AG04450 (cell line): ENCODE measurements at regions of chr18 and their contacts with region 1.

Region 1: GRCh38 chr18:8654503-8655451 is 45.5 kb downstream of the RAB12 start:
- DNase-seq: no peak
- H3K4me3 ChIP-seq: no peak overlapping the region
- H3K27ac ChIP-seq: no peak overlapping the region
- H3K27me3 ChIP-seq: no peaks in the 10 kb centered on the region
- CTCF ChIP-seq: peak; percentile 76

Region 2: GRCh38 chr18:8982416-8983184 is 327.8 kb after region 1 on chr18:
- CTCF ChIA-PET with region 1: interaction called, 67 read pairs
- POLR2A ChIA-PET with region 1: no interaction called
- DNase-seq: peak; percentile 58
- H3K4me3 ChIP-seq: no peak overlapping the region
- H3K27ac ChIP-seq: peak overlapping the region; percentile 78
- H3K27me3 ChIP-seq: no peaks in the 10 kb centered on the region
- CTCF ChIP-seq: peak; percentile 33

Region 3: DNA sequence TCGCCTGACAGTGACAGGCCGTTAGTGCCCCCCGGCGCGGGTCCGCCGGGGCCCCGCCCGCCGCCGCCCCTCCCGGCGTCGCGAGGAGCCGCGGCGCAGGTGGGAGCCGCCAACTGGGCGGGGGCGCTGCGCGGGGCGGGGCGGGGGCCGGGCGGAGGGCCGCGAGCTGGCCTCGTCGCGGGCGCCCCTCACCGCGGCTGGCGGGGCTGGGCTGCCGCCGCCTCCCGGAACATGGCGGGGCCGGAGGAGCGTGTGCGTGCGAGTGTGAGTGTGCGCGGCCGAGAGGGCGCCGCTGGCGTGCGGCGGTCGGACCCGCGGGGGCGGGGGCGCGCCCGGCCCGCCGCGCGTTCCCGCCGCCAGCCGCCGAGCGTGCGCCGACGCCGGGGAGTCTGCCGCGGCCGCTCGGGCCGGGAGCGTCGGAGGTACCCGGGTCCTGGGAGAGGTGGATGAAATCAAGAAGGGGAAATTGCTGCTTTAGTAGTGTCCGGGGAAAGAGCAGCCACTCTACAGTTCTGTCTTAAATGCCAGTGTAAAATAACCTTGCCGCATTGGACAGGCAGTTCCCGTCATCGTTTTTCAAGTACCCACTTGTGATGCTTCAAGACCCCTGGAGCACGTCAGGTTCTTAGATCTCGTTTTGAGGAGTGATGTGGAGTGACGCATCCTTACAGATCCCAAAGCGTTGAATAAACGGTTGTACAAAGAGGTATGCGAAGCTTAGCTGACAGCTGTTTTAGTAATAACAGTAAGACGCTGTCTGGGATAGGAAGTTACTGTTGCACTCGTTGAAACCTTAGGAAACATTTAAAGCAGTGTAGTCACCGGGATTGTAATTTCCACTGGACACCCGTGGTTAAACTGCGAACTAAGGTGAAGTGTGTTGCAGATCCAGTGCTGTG is 482.6 kb after region 1 on chr18:
- CTCF ChIA-PET with region 1: no interaction called
- POLR2A ChIA-PET with region 1: no interaction called
- DNase-seq: peak; percentile 82
- H3K4me3 ChIP-seq: peak overlapping the region; percentile 80
- H3K27ac ChIP-seq: peak overlapping the region; percentile 98
- H3K27me3 ChIP-seq: no peaks in the 10 kb centered on the region
- CTCF ChIP-seq: no peak